ENCODE measurements at regions of chr2 and their contacts with region 1.

Region 1: DNA sequence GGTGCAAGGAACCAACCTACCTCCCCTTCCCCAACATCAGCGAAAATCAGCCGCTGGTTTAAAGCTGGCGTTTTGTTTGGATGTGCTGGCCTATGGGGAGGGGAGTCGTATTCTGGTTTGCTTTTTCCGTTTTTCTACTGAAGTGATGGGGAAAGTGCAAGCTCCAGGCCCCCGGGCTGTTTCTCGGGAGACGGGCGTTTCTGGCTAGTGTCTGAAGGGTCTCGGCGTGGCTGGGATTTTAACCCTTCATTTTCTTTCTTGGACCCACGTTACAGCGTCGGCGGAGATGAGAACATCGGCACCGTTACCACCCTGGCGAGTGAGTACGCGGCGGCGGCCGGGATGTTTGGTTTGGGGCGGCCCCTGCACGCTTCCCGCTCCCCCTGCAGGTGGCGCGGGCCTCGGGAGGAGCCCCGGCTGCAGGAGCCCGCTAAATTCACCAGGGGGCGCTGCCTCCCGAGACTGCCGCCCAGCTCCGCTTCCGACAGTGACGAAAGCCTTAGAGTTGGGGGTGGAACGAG is 70.7 kb downstream of the PLB1 start:
- DNase-seq: peak; percentile 44 to 90
- H3K4me3 ChIP-seq: peak overlapping the region; percentile 50 to 71
- H3K27ac ChIP-seq: peak overlapping the region; percentile 32 to 39
- H3K4me1 ChIP-seq: peaks cover 0 to 5% of the 10 kb centered on the region in 2 donors
- H3K27me3 ChIP-seq: no peaks in the 10 kb centered on the region
- CTCF ChIP-seq: peak; percentile 100

Region 2: GRCh38 chr2:27683390-27684071 is 883.0 kb before region 1 on chr2:
- intact Hi-C with region 1: loop called (anchors 10 kb)
- DNase-seq: peak in 1 of 2 donors; percentile 90
- H3K4me3 ChIP-seq: no peak overlapping the region
- H3K27ac ChIP-seq: peak overlapping the region; percentile 89 to 93
- H3K4me1 ChIP-seq: peaks cover 9 to 16% of the 10 kb centered on the region in 2 donors
- H3K27me3 ChIP-seq: no peaks in the 10 kb centered on the region
- CTCF ChIP-seq: peak; percentile 85 to 89 (median 88)

Region 3: DNA sequence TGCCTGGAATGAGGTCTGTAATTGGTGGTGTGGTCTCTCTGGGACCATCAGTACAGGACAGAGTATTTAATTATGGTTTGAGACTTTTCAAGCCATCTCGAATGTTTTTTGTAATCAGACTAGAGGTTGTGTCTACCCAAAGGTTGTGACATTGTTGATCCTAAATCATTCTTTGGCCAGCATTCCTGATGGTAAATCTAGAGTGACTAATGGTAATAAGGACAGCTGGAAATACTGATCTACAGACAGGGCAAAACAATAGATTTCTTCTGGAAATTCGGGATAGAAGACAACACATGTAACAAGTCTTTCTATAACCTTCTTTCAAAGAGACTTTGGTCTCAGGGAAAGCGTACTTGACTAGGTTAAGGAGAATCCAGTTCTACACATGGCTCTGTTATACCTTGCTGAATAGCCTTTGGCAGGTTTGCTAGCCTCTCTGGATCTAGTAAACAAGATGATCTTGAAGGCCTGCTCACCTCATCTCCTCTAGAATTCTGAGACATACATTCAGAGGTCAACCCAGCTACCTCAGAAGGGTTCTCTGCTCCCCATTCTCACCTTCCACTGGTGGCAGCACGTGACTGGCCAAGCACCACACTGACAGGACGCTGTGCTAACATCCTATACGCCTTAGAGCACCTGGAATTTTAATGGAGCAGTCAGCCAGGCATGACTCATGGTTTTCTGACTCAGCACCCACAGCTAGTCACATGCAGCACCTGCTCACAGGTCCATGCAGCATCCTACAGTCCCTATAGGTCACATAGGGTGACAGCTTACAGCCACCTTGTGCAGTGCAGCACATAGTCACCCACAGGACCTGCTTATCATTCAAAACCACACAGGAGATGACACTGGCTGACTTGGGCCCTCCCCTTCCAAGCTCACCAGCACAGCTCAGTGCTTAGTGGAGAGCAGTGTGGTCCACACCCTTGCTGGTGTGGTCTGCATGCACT is 58.5 kb before region 1 on chr2:
- intact Hi-C with region 1: no loop called
- DNase-seq: no peak
- H3K4me3 ChIP-seq: no peak overlapping the region
- H3K27ac ChIP-seq: no peak overlapping the region
- H3K4me1 ChIP-seq: no peaks in the 10 kb centered on the region
- H3K27me3 ChIP-seq: no peaks in the 10 kb centered on the region
- CTCF ChIP-seq: no peak

Region 4: DNA sequence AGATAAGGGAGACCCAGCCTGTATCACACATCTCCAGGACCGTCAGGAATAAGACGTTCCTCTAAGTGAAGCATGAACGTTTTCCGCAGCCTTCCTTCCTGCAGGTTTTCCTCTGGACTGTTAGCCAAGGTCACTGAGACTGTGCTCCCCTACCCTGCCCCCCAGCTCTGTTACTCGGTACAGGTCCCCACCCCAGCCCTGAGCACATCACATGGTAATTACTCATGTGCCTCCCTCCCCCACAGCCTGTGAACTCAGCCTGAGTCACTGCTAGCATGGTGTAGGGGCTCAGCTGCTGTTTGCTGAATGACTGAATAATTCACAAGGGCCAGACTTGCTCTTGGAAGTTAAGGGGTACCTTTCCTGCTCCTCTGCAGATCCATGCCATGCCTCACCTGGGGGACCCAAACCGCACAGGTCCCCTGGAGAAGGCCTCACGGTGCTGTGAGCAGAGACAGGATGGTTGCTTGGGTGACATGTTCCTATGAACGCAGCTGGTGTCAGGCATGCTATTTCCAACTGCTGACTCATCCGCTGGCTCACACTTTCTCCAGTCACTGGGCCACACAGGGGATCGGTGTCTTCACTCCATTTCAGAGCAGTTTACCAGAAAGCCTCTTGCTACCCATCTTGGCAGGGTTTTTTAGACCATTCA is 17.4 kb after region 1 on chr2:
- intact Hi-C with region 1: loop called (anchors 2 kb)
- DNase-seq: peak; percentile 78 to 93
- H3K4me3 ChIP-seq: no peak overlapping the region
- H3K27ac ChIP-seq: peak overlapping the region; percentile 80 to 90
- H3K4me1 ChIP-seq: peaks cover 4 to 15% of the 10 kb centered on the region in 2 donors
- H3K27me3 ChIP-seq: no peaks in the 10 kb centered on the region
- CTCF ChIP-seq: no peak

Region 5: DNA sequence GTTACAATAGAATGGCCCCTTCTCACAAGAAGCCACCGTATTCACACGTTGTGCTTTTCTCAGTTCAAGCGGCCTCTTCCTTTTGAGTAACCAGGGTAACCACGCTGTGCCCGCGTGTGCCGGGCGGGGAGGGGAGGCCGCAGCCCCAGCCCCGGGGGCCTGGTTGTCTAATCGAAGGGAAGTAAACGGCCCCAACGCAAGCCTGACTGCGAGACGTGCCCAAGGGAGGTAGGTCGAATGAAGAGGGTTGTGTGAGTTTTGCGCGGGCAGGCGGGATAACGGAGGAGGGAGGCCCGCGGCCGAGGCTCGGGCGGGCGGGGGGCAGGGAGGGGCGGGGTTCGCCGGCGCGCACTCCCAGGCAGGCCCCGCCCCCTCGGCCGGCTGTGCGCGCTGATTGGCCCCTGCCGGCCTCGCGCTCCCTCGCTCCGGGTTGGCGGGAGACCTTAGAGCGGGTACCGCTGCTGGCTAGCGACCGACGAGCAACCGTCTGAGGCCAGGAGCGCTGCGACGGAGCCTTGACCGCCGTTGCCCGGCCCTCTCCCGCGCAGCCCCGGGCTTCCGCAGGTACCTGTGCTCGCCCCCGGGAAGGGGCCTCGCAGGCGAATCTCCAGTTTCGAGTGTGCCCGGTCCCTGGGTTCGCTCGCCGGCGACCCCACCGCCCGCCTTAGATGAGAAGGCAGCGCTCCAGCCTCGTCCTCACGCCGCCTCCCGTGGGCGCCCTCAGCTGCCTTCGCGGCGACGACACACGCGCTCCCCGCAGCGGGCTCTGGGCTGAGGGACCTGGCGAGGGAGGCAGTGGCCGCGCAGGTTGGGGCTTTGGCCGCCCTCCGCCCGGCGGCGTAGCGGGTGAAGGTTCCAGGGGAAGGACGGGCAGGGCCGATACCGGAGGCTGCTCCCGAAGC is 244.1 kb after region 1 on chr2 and contains the start of gene SPDYA:
- intact Hi-C with region 1: loop called (anchors 2 kb)
- DNase-seq: peak; percentile 36 to 85
- H3K4me3 ChIP-seq: peak within 1 kb of the TSS; percentile 58 to 69
- H3K27ac ChIP-seq: peak within 1 kb of the TSS in 1 of 2 donors; percentile 55
- H3K4me1 ChIP-seq: peaks cover 11% of the 10 kb centered on the region in 2 donors
- H3K27me3 ChIP-seq: no peaks in the 10 kb centered on the region
- CTCF ChIP-seq: peak in 2 of 3 experiments; percentile 9 to 23
- total RNA-seq, gene SPDYA: 0.32 TPM

Region 6: DNA sequence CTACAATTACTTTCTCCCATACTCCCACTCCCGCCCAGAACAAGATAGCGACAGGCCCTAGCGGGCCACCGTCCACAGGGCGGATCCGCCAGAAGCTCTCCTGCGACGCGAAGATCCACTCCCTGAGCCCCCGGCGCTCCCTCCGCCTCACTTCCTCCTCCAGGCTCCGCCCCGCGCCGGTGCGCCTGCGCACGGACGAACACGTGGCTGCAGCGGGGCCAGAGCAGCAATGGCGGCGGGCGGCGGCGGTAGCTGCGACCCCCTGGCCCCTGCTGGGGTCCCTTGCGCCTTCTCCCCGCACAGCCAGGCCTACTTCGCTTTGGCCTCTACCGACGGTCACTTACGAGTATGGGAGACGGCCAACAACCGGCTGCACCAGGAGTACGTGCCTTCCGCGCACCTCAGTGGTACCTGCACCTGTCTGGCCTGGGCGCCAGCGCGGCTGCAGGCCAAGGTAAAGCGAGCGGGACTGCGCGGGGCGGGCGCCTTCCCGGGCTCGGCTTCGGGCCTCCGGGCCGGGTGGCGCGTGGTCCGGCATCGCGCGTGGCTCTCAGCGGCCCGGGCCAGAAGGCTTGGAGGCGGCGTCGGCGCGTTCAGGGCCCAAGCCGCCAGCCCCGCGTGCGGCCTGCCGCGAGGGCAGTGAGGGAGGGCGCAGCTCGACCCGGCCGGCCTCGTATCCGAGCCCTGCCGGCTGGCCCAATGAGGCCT is 328.0 kb after region 1 on chr2 and contains the start of gene WDR43:
- intact Hi-C with region 1: loop called (anchors 2 kb)
- DNase-seq: peak; percentile 89 to 98
- H3K4me3 ChIP-seq: peak within 1 kb of the TSS; percentile 96 to 100
- H3K27ac ChIP-seq: peak within 1 kb of the TSS; percentile 81 to 87
- H3K4me1 ChIP-seq: peaks cover 0 to 8% of the 10 kb centered on the region in 2 donors
- H3K27me3 ChIP-seq: no peaks in the 10 kb centered on the region
- CTCF ChIP-seq: no peak
- total RNA-seq, gene WDR43: 21.5 TPM